Mammary epithelial cell (primary cell): ENCODE measurements at regions of chr2 and their contacts with region 1.

Region 1: GRCh38 chr2:235642446-235643098 is 148.7 kb downstream of the AGAP1 start:
- DNase-seq: peak; percentile 42
- H3K4me3 ChIP-seq: no peak overlapping the region
- H3K27ac ChIP-seq: no peak overlapping the region
- H3K4me1 ChIP-seq: peaks cover 18% of the 10 kb centered on the region
- H3K27me3 ChIP-seq: no peaks in the 10 kb centered on the region
- CTCF ChIP-seq: peak in 1 of 2 donors; percentile 1

Region 2: DNA sequence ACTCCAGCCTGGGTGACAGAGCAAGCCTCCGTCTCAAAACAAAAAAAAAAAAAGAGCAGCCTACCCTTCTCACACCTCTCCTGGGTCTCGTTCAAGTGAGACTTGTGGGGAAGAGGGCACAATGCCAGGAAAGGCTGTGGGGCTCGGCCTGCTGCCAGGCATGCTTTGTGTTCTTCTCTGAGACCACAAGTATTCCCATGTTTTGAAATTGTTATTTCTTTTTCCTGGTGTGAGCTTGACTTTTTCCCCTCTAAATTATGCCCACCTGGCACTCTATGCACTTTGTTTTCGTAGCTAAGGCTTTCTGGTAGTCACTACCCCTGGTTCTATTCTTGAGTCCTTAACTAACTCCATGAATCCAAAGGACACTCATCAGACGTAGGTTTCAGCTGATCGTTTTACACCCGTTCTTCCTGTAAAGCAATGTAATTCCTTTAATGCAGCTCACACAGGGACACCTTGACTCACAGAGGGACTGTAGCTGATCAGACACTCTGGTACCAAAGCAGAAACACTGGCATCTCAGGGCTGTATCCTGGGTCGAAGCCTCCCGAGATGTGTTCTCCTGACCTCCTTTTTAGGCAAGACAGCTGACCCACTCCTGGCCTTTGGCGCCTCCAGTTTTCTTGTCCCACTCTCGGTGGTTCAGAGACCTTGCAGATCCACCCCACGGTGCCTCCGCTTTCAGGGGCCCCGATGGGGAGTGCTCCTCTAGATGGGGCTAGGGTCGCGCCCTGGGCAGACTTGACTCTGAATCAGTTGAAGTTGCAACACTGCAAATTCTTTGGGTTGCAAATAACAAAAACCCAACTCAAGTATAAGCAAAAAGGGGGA is 342.0 kb before region 1 on chr2:
- CTCF ChIA-PET with region 1: no interaction called
- dilution Hi-C with region 1: loop called (anchors 10 kb)
- in situ Hi-C with region 1: no loop called
- intact Hi-C with region 1: no loop called
- DNase-seq: peak; percentile 2
- H3K4me3 ChIP-seq: no peak overlapping the region
- H3K27ac ChIP-seq: no peak overlapping the region
- H3K4me1 ChIP-seq: peaks cover 7% of the 10 kb centered on the region
- H3K27me3 ChIP-seq: no peaks in the 10 kb centered on the region
- CTCF ChIP-seq: no peak

Region 3: GRCh38 chr2:235551965-235552364 is 90.6 kb before region 1 on chr2:
- CTCF ChIA-PET with region 1: no interaction called
- dilution Hi-C with region 1: loop called (anchors 10 kb)
- in situ Hi-C with region 1: no loop called
- intact Hi-C with region 1: no loop called
- DNase-seq: peak; percentile 36
- H3K4me3 ChIP-seq: no peak overlapping the region
- H3K27ac ChIP-seq: no peak overlapping the region
- H3K4me1 ChIP-seq: no peaks in the 10 kb centered on the region
- H3K27me3 ChIP-seq: no peaks in the 10 kb centered on the region
- CTCF ChIP-seq: peak; percentile 19 to 53

Region 4: DNA sequence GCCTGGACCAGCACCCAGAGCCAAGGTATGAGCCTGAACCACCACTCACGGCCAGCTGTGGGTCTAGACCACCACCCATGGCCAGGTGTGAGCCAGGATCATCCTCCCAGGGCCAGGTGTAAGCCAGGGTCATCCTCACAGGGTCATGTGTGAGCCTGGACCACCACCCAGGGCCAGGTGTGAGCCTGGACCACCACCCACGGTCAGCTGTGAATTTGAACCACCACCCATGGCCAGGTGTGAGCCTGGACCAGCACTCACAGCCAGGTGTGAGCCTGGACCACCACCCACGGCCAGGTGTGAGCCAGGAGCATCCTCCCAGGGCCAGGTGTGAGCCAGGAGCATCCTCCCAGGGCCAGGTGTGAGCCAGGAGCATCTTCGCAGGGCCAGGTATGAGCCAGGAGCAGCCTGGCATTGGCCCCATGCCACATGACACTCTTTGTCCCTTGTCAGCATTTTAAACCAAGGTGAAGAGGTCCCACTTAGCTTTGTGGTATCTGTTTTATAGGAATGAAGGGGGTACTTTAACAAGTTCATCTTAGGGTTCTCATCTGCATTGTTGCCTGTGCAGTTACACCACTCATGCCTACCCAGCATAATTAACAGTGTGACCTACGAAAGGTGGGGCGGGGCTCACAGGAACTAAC is 77.6 kb before region 1 on chr2:
- CTCF ChIA-PET with region 1: no interaction called
- dilution Hi-C with region 1: no loop called
- in situ Hi-C with region 1: no loop called
- intact Hi-C with region 1: no loop called
- DNase-seq: no peak
- H3K4me3 ChIP-seq: no peak overlapping the region
- H3K27ac ChIP-seq: no peak overlapping the region
- H3K4me1 ChIP-seq: no peaks in the 10 kb centered on the region
- H3K27me3 ChIP-seq: no peaks in the 10 kb centered on the region
- CTCF ChIP-seq: no peak

Region 5: DNA sequence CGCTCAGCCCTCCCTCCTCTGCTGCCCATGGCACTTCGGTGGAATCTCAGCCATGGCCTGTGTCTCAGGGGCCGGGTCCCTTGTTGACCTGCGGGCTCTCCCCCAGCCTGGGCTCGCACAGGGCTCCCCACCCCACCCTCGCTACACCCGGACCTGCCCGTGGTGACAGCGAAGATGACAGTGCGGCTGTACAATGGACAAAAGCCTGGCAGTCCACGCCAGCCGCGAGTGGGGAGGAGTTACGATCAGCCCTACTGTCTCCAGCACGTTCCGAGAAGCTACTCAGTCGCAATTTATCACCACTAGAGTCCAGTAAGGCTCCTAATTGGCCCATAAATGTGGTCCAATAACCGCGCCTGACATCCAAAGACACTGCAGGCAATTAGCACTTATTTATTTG is 494.0 kb after region 1 on chr2:
- CTCF ChIA-PET with region 1: no interaction called
- dilution Hi-C with region 1: no loop called
- in situ Hi-C with region 1: no loop called
- intact Hi-C with region 1: no loop called
- DNase-seq: no peak
- H3K4me3 ChIP-seq: no peak overlapping the region
- H3K27ac ChIP-seq: no peak overlapping the region
- H3K4me1 ChIP-seq: no peaks in the 10 kb centered on the region
- H3K27me3 ChIP-seq: no peaks in the 10 kb centered on the region
- CTCF ChIP-seq: no peak